Activated CD8-positive, alpha-beta memory T cell treated with anti-CD3 and anti-CD28 coated beads, Interleukin-2, amount 10 ng/mL, durations not matched to agents 7 days and 5 days (primary cell): ENCODE measurements at regions of chr11 and their contacts with region 1.

Region 1: GRCh38 chr11:73393479-73394380 is 17.5 kb downstream of the RELT start:
- DNase-seq: peak; percentile 77
- ATAC-seq: peak; percentile 74
- H3K4me3 Mint-ChIP-seq: no peak overlapping the region
- H3K27ac Mint-ChIP-seq: no peak overlapping the region
- H3K4me1 Mint-ChIP-seq: no peaks in the 10 kb centered on the region
- H3K27me3 Mint-ChIP-seq: no peaks in the 10 kb centered on the region

Region 2: DNA sequence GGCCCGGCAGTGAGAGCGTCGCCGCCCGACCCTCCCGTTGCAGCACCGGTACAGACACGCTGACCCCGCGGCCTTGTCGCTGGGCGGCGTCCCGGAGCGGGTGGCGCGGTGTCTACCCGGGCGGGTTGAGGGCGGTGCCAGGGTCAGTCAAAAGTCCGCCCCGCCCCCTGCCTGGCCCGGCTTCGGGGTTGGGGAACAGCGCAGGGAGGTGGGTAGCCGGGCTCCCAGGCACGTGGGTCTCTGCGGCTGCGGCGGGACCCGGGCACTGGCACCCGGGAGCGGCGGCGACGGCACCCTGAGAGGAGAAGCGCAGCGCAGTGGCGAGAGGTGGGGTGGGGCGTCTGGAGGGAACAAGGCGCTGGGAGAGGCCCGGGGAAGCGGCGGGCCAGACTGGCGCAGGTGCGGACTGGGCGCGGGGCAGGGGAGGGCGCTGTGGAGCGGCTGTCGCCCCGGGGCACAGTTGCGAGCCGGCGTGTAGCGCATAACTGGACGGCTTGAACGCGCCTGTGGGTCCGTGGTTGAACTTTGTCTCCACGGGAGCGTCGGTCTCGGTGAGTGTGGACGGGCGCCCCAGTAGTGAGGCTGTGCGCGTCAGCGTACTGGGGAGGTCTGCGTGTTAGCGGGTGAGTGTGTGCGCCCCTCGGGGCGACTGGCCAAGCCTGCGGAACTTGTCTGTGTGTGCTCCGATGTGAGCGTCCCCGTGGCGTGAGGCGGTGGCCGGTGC is 175.5 kb before region 1 on chr11 and contains the start of gene P2RY2:
- CTCF ChIA-PET with region 1: no interaction called
- DNase-seq: peak; percentile 50
- ATAC-seq: peak; percentile 79
- H3K4me3 Mint-ChIP-seq: peak within 1 kb of the TSS; percentile 19
- H3K27ac Mint-ChIP-seq: no peak within 1 kb of the TSS
- H3K4me1 Mint-ChIP-seq: peaks cover 3% of the 10 kb centered on the region
- H3K27me3 Mint-ChIP-seq: peaks cover 38% of the 10 kb centered on the region
- total RNA-seq, gene P2RY2: not detected

Region 3: DNA sequence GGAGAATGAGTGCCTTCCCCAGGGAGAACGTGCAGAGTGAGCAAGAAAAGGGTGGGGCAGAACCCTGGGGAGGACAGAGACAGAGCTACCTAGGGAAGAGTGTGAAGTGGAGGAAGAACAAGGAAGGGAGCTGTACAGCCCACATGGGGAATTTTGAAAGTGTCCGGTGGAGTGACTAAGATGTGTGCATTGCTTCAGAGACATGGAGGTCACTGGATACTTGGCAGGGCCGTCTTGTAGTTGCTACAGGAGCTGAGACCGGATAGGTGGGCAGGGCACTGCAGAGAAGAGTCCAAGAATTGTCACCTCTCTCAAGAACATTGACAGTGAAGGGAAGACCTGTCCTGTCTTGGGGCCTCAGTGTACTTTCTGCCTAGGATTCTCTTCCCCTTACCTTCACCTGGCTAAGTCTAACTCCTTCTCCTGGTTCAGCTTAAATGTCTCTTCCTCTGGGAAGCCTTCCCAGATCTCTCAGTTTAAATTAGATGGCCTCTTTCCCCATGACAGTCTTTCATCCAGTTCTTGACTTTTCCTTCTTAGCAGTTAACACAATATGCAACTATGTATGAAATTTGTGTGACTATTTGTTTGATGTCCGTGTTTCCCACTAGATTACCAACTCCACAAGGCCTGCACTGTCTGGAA is 130.8 kb before region 1 on chr11:
- CTCF ChIA-PET with region 1: no interaction called
- DNase-seq: no peak
- ATAC-seq: no peak
- H3K4me3 Mint-ChIP-seq: no peak overlapping the region
- H3K27ac Mint-ChIP-seq: no peak overlapping the region
- H3K4me1 Mint-ChIP-seq: no peaks in the 10 kb centered on the region
- H3K27me3 Mint-ChIP-seq: peaks cover 48% of the 10 kb centered on the region

Region 4: DNA sequence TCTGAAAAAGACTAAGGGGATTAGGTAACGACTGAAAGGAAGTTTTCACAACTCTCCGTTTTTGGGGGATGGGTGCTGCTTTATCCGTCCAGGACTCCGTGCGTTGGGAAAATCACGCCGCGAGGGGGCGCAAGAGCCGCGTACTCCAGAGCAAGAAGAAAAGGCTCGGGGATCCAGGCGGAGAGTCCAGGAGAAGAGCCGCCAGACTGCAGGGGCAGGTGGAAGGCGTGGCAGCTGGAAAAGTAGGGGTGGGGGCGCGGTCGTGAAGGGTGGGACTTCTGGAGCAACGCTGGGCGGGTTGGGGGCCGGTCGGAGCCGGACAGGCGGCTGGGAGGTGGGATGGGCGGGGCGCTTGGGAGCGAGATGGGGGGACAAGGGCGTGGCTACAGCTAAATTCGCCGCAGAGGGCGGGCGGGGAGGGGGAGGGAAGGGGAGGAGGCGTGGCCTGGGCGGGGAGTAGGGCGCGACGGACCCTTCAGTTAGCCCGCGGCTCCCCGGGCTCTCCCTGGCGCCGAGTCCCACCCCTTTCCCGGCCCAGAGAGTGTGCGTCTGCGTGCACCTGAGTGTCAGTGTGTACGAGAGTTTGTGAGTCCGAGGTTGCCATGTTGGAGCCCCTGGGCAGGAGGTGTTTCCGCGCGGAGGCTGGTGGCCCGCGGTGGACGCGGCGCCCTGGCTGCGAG is 86.3 kb before region 1 on chr11:
- CTCF ChIA-PET with region 1: interaction called, 12 read pairs
- DNase-seq: peak; percentile 93
- ATAC-seq: peak; percentile 76
- H3K4me3 Mint-ChIP-seq: peak overlapping the region; percentile 74
- H3K27ac Mint-ChIP-seq: peak overlapping the region; percentile 44
- H3K4me1 Mint-ChIP-seq: peaks cover 6% of the 10 kb centered on the region
- H3K27me3 Mint-ChIP-seq: peaks cover 33% of the 10 kb centered on the region

Region 5: DNA sequence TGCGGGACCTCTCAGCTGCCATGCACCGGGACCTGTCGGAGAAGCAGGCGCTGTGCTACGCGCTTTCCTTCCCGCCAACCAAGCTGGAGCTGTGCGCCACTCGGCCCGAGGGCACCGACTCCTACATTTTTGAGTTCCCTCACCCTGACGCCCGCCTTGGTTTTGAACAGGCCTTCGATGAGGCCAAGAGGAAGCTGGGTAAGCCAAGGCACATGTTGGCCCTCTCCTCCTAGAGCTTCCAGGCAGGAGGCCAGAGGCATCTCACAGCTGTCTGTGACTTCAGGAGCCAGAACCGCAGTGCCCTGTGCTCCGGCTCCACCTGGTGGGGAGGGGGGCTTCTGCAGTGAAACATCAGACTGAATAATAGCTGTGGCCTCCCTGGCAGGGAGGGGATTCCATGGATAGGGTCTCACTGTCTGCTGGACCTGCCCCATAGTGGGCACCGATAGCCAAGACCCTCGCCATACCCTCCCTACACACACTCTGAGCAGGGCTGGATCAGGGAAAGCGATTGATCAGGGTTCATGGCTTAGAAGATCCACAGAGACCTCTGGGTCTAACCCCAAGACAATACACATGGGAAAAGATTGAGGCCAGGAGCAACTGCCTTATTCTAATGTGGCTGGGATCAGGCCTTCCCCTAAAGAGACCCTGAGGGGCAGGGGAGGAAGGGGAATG is 33.3 kb before region 1 on chr11:
- CTCF ChIA-PET with region 1: interaction called, 130 read pairs
- DNase-seq: peak; percentile 54
- ATAC-seq: peak; percentile 38
- H3K4me3 Mint-ChIP-seq: no peak overlapping the region
- H3K27ac Mint-ChIP-seq: no peak overlapping the region
- H3K4me1 Mint-ChIP-seq: peaks cover 3% of the 10 kb centered on the region
- H3K27me3 Mint-ChIP-seq: no peaks in the 10 kb centered on the region

Region 6: GRCh38 chr11:73376160-73376802 is 17.4 kb before region 1 on chr11 and contains the start of gene RELT:
- CTCF ChIA-PET with region 1: interaction called, 10 read pairs
- DNase-seq: peak; percentile 94
- ATAC-seq: peak; percentile 81
- H3K4me3 Mint-ChIP-seq: peak within 1 kb of the TSS; percentile 97
- H3K27ac Mint-ChIP-seq: peak within 1 kb of the TSS; percentile 99
- H3K4me1 Mint-ChIP-seq: peaks cover 49% of the 10 kb centered on the region
- H3K27me3 Mint-ChIP-seq: no peaks in the 10 kb centered on the region
- total RNA-seq, gene RELT: 31.2 to 39.6 TPM

Region 7: GRCh38 chr11:73578592-73579185 is 185.0 kb after region 1 on chr11:
- CTCF ChIA-PET with region 1: no interaction called
- DNase-seq: peak; percentile 41
- ATAC-seq: peak; percentile 75
- H3K4me3 Mint-ChIP-seq: no peak overlapping the region
- H3K27ac Mint-ChIP-seq: no peak overlapping the region
- H3K4me1 Mint-ChIP-seq: peaks cover 17% of the 10 kb centered on the region
- H3K27me3 Mint-ChIP-seq: no peaks in the 10 kb centered on the region

Region 8: DNA sequence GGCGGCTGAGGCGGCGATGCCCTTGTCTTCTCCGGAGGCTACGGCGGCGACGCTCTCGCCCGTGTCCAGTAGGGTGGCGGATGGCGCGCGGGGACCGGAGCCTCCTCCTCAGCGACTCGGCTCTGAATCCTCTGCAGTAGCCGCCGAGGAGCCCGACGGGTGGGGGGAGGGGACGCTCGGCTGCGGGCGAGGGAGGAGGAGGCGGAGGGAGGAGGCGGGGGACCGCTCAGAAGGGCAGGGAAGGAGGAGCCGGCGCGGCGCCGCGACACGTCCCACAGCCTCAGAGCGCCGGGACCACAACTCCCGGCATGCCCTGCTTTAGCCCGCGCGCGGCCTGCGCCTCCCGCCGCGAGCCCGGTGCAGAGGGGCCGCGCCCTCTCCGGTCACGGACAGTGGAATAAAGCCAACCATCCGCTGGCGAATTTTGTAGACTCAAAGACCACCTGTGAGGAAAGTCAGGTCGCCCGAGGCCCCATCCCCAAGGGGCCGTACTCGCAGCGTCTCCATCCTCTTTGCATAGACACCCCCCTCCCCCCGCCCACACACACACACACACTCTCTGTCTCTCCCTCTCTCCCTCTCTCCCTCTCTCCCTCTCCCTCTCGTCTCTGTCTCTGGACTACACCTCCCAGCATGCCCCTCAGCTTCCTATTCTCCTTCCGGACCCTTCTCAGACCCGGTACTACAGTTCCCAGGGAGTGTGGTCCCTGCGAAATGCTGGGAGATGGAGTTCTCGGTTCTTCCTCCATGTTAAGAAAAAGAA is 204.4 kb after region 1 on chr11 and contains the start of gene FAM168A:
- CTCF ChIA-PET with region 1: no interaction called
- DNase-seq: peak; percentile 96
- ATAC-seq: peak; percentile 96
- H3K4me3 Mint-ChIP-seq: peak within 1 kb of the TSS; percentile 90
- H3K27ac Mint-ChIP-seq: peak within 1 kb of the TSS; percentile 87
- H3K4me1 Mint-ChIP-seq: peaks cover 30% of the 10 kb centered on the region
- H3K27me3 Mint-ChIP-seq: no peaks in the 10 kb centered on the region
- total RNA-seq, gene FAM168A: 19.3 to 20.5 TPM